SK-N-SH (cell line): ENCODE measurements at regions of chr3 and their contacts with region 1.

Region 1: DNA sequence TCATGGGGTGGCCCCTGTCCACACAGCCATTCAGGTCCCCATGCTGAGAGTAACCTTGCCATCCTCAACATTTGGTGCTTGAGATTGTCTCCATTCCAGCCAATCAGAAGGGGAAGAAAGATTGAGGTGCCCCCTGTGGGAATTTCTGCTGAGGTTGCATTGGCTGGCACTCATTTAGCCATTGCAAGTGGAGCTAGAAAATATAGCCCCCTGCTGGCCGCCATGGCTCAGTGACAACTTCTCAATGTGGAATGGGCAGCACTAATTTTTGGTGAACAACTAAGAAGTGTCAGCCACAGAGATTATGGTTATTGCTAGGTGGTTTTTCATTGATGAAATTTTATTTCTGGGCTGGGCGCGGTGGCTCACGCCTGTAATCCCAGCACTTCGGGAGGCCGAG is 22.0 kb downstream of the COL6A6 start:
- DNase-seq: peak; percentile 68
- H3K4me3 ChIP-seq: peak overlapping the region in 1 of 2 experiments; percentile 51; a peak in 1 of 4 replicates
- H3K27ac ChIP-seq: no peak overlapping the region
- H3K4me1 ChIP-seq: no peaks in the 10 kb centered on the region
- H3K27me3 ChIP-seq: no peaks in the 10 kb centered on the region
- CTCF ChIP-seq: peak; percentile 66
- EP300 ChIP-seq: no peak
- RAD21 ChIP-seq: peak; percentile 75

Region 2: GRCh38 chr3:130480736-130481135 is 58.3 kb before region 1 on chr3:
- CTCF ChIA-PET with region 1: interaction called, 11 read pairs
- POLR2A ChIA-PET with region 1: no interaction called
- DNase-seq: no peak
- H3K4me3 ChIP-seq: no peak overlapping the region
- H3K27ac ChIP-seq: no peak overlapping the region
- H3K4me1 ChIP-seq: no peaks in the 10 kb centered on the region
- H3K27me3 ChIP-seq: no peaks in the 10 kb centered on the region
- CTCF ChIP-seq: no peak
- EP300 ChIP-seq: no peak
- RAD21 ChIP-seq: peak; percentile 54

Region 3: GRCh38 chr3:130504701-130505100 is 34.3 kb before region 1 on chr3:
- CTCF ChIA-PET with region 1: interaction called, 11 read pairs
- POLR2A ChIA-PET with region 1: no interaction called
- DNase-seq: no peak
- H3K4me3 ChIP-seq: no peak overlapping the region
- H3K27ac ChIP-seq: no peak overlapping the region
- H3K4me1 ChIP-seq: no peaks in the 10 kb centered on the region
- H3K27me3 ChIP-seq: no peaks in the 10 kb centered on the region
- CTCF ChIP-seq: no peak
- EP300 ChIP-seq: no peak
- RAD21 ChIP-seq: no peak